ENCODE measurements at regions of chr12 and their contacts with region 1.

Region 1: GRCh38 chr12:13211859-13212664 is 15.5 kb downstream of the EMP1 start:
- DNase-seq: peak; percentile 76
- H3K4me3 Mint-ChIP-seq: peak overlapping the region; percentile 43
- H3K27ac Mint-ChIP-seq: peak overlapping the region; percentile 47
- H3K4me1 Mint-ChIP-seq: peaks cover 65% of the 10 kb centered on the region
- H3K27me3 Mint-ChIP-seq: no peaks in the 10 kb centered on the region

Region 2: DNA sequence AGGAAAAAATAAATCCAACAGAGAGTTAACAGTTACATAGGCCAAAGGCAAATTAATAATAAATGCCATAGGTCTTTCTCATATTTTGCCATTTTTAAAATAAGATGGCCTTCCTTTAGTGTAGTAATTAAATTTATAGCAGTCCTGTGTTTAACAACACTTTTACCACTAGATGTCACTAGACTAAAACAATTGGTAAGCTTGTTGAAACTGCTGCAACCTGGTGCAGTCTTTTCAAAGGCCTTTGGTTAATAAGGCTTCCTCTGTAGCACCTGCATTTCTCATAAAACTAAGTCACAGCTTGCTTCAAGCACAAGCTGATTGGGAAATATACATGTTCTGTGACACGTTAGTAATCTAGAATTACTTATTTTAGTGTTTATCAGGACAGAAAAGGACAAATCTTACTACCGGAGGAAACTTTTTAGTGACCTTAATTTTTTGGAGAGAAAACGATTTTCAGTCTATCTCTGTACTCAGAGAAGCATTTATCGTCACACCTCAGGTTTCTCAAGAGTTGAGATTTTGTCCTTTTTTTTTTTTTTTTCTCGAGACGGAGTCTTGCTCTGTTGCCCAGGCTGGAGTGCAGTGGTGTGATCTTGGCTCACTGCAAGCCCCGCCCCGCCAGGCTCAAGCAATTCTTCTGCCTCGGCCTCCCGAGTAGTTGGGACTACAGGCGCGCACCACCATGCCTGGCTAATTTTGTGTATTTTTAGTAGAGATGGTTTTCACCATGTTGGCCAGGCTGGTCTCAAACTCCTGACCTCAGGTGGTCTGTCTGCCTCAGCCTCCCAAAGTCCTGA is 835.2 kb before region 1 on chr12:
- CTCF ChIA-PET with region 1: no interaction called
- POLR2A ChIA-PET with region 1: no interaction called
- DNase-seq: no peak
- H3K4me3 Mint-ChIP-seq: no peak overlapping the region
- H3K27ac Mint-ChIP-seq: peak overlapping the region; percentile 65
- H3K4me1 Mint-ChIP-seq: peaks cover 60% of the 10 kb centered on the region
- H3K27me3 Mint-ChIP-seq: no peaks in the 10 kb centered on the region

Region 3: DNA sequence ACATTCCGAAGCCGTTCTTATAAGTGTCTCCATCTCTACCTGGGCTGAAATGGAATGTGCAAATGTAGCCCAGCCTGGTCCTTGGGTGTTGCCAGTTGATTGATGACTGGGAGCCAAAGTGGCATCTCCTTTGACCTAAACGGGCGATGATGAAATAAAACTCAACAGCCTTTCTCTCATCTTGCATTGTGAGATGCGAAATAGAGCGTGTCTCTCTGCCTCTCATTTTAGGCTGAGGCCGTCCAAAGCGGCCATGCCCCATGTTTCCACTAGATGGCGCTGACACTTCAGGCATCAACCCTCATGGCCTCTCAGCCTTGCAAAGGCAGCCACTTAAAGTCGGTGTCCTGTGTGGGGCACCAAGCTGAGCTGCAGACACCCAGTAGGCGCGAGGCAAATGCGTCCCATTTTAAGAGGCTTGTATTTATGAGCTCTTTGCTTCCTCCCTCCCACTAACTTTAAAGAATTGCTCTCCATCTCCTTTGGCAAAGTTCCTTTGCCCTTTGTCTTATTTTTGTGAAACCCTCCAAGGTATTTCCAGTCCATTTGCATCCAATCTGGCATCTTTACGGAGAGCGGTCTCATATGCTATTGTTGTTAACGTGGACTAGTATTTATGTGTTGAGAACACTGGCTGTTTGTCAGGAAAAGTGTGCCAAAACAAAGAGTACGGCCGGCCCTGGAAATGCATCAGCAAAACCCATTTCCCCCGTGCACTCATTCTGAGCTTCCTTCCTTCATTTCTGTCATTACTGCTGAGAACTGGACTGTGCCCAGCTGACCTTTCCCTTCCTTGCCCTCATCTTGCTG is 295.7 kb before region 1 on chr12:
- CTCF ChIA-PET with region 1: interaction called, 36 read pairs
- POLR2A ChIA-PET with region 1: no interaction called
- DNase-seq: peak; percentile 89
- H3K4me3 Mint-ChIP-seq: no peak overlapping the region
- H3K27ac Mint-ChIP-seq: no peak overlapping the region
- H3K4me1 Mint-ChIP-seq: peaks cover 10% of the 10 kb centered on the region
- H3K27me3 Mint-ChIP-seq: peaks cover 18% of the 10 kb centered on the region

Region 4: DNA sequence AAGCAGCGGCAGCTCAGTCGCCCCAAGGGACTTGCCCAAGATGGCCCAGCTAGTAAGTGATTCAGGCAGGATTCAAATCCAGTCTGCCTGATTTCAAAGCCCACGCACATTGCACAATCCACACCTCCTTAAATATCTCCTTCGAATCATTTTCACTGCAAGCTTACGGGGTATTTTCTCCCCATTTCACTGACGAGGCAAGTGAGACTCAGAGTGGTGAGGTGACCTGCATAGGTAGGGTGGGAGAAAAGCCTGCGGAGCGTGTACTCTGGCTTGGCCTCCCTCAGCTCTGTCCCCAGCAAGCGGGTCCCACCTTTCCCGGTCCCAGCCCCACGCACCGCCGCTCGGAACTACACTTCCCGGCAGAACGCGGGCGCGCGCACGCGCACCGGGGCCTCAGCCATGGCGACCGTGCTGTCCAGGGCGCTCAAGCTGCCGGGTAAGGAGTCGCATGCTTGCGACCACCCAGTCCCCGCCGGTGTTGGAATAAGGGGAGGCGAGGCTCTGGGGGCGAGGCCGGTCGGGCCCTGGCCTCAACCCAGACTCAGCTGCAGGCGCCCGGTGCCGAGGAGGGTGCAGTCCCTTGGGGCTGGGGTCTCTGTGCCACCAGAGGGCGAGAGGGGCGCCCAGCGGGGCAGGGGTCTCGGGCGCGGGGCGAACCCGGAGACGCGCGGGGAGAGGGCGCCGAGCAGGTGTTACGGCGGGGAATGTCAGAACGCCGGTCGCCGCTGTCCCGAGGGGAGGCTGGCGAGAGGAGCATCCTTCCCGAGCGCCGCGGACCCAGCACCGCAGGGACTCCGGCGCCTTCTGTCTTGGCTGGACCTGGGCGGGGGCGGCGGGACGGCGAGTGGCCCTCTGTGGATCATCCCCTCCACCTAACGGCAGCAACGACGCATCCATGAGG is 167.8 kb before region 1 on chr12 and contains the start of gene FAM234B:
- CTCF ChIA-PET with region 1: interaction called, 23 read pairs
- POLR2A ChIA-PET with region 1: no interaction called
- DNase-seq: peak; percentile 73
- H3K4me3 Mint-ChIP-seq: peak within 1 kb of the TSS; percentile 78
- H3K27ac Mint-ChIP-seq: no peak within 1 kb of the TSS
- H3K4me1 Mint-ChIP-seq: peaks cover 18% of the 10 kb centered on the region
- H3K27me3 Mint-ChIP-seq: peaks cover 11% of the 10 kb centered on the region
- total RNA-seq, gene FAM234B: 4.5 to 5.2 TPM

Region 5: DNA sequence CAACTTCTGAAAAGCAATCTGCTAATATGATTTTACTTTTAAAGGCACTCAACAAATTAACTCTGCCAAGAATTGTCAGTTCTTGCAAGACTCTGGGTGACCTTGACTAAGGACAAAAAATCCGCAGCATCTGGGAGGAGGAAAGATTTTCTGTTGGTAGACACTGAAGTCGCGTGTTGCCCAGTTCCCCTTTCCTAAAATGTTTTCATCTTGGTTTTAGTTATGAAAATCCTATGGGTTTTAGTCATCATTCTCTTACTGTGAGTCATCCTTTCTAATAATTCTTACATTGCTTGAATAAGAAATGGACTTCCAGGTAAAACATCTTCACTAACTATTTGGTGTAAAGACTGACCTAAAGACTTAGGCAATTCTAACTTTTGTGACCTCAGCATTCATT is 117.7 kb before region 1 on chr12:
- CTCF ChIA-PET with region 1: interaction called, 102 read pairs
- POLR2A ChIA-PET with region 1: interaction called, 3 read pairs
- DNase-seq: no peak
- H3K4me3 Mint-ChIP-seq: no peak overlapping the region
- H3K27ac Mint-ChIP-seq: no peak overlapping the region
- H3K4me1 Mint-ChIP-seq: peaks cover 32% of the 10 kb centered on the region
- H3K27me3 Mint-ChIP-seq: no peaks in the 10 kb centered on the region

Region 6: GRCh38 chr12:13100882-13101769 is 110.9 kb before region 1 on chr12:
- CTCF ChIA-PET with region 1: interaction called, 102 read pairs
- POLR2A ChIA-PET with region 1: interaction called, 11 read pairs
- DNase-seq: peak; percentile 94
- H3K4me3 Mint-ChIP-seq: peak overlapping the region; percentile 71
- H3K27ac Mint-ChIP-seq: peak overlapping the region; percentile 75
- H3K4me1 Mint-ChIP-seq: peaks cover 59% of the 10 kb centered on the region
- H3K27me3 Mint-ChIP-seq: no peaks in the 10 kb centered on the region

Region 7: DNA sequence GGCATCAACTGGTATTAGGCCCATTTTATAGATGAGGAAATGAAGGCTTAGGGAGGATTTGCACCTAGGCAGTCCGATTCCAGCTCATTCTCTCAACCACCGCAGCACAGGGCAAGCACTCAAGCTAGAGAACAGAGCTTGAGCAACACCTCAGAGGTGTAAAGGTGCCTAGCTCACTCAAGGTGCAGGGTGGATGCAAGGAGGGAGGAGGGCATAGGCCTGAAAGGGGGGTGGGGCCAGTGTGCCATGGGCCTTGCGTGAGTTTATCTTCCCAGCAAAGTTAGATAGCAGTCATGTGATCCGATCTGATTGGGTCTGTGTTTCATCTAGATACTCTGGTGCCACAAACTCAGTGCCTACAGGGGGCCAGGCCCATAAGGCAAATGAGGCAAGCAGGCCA is 25.7 kb before region 1 on chr12:
- CTCF ChIA-PET with region 1: no interaction called
- POLR2A ChIA-PET with region 1: no interaction called
- DNase-seq: no peak
- H3K4me3 Mint-ChIP-seq: no peak overlapping the region
- H3K27ac Mint-ChIP-seq: no peak overlapping the region
- H3K4me1 Mint-ChIP-seq: peaks cover 27% of the 10 kb centered on the region
- H3K27me3 Mint-ChIP-seq: peaks cover 35% of the 10 kb centered on the region

Region 8: GRCh38 chr12:13196130-13196921 is 15.7 kb before region 1 on chr12 and contains the start of gene EMP1:
- CTCF ChIA-PET with region 1: interaction called, 21 read pairs
- POLR2A ChIA-PET with region 1: interaction called, 10 read pairs
- DNase-seq: peak; percentile 83
- H3K4me3 Mint-ChIP-seq: peak within 1 kb of the TSS; percentile 78
- H3K27ac Mint-ChIP-seq: peak within 1 kb of the TSS; percentile 79
- H3K4me1 Mint-ChIP-seq: peaks cover 69% of the 10 kb centered on the region
- H3K27me3 Mint-ChIP-seq: peaks cover 6% of the 10 kb centered on the region
- total RNA-seq, gene EMP1: 90.4 to 101 TPM

Region 9: GRCh38 chr12:13283867-13284266 is 71.8 kb after region 1 on chr12:
- CTCF ChIA-PET with region 1: no interaction called
- POLR2A ChIA-PET with region 1: no interaction called
- DNase-seq: no peak
- H3K4me3 Mint-ChIP-seq: no peak overlapping the region
- H3K27ac Mint-ChIP-seq: no peak overlapping the region
- H3K4me1 Mint-ChIP-seq: no peaks in the 10 kb centered on the region
- H3K27me3 Mint-ChIP-seq: peaks cover 20% of the 10 kb centered on the region

Region 10: DNA sequence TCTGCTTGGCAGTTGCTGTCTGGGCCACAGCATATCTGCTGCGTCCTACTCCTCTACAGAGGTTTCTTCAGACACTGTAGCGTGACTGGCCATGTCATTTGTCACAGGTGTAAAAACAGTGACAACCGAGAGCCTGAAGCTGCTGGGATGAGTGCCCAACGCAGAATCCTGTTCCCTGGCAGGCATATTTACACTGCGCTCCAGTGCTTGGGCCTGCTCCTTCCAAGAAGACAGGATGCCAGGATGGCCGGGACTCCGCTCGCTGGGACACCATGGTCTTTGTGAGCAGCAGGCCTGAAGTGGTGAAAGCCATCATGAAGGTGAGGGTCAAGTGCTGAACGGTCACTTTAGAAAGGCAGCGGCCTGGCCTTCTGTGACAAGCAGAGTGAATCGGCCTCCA is 155.9 kb after region 1 on chr12:
- CTCF ChIA-PET with region 1: no interaction called
- POLR2A ChIA-PET with region 1: no interaction called
- DNase-seq: no peak
- H3K4me3 Mint-ChIP-seq: no peak overlapping the region
- H3K27ac Mint-ChIP-seq: no peak overlapping the region
- H3K4me1 Mint-ChIP-seq: no peaks in the 10 kb centered on the region
- H3K27me3 Mint-ChIP-seq: peaks cover 1% of the 10 kb centered on the region